Activated CD8-positive, alpha-beta T cell treated with anti-CD3 and anti-CD28 coated beads for 36 hours (primary cell): ENCODE measurements at regions of chr1 and their contacts with region 1.

Region 1: DNA sequence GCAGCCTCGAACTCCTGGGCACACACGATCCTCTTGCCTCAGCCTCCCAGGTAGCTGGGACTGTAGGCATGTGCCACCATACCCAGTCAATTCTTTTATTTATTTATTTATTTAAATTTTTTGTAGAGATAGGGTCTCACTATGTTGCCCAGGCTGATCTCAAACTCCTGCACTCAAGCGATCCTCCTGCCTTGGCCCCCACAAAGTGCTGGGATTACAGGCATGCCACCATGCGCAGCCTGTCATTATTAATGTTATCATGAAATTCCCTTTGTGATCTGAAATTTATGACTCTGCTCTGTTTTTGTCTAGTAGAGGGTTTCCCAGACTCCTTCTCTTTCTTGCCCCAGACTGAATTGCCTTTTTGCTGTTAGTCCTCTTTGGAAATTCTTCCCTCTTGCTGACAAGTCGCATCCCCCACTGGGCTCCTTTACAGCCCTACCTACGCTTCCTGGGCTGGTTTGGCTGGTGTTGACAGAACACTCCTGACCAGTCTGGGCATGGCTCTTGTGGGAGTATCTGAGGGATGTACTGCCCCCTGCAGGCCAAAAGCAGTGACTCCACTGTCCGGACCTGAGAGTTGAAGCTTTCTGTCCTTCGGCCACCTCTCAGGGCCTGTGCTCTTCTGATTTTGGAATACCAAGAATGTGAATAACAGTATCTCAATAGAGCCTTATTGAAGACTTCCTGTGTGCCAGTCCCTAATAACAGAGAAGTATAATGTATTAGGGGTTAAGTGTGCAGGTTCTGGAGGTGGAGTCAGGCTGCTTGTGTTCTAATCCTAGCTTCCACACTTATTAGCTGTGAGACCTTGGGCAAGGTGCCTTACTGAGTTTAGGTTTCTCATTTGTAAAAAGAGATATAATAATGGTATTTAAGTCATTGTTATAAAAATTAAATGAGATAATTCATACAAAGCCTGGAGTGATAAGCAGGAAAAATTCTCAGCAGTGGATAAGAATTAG is 28.2 kb downstream of the TCEANC2 start:
- DNase-seq: peak; percentile 82
- ATAC-seq: peak; percentile 94
- H3K4me3 Mint-ChIP-seq: no peak overlapping the region
- H3K27ac Mint-ChIP-seq: no peak overlapping the region
- H3K4me1 Mint-ChIP-seq: peaks cover 7% of the 10 kb centered on the region
- H3K27me3 Mint-ChIP-seq: no peaks in the 10 kb centered on the region
- CTCF ChIP-seq: peak; percentile 80

Region 2: DNA sequence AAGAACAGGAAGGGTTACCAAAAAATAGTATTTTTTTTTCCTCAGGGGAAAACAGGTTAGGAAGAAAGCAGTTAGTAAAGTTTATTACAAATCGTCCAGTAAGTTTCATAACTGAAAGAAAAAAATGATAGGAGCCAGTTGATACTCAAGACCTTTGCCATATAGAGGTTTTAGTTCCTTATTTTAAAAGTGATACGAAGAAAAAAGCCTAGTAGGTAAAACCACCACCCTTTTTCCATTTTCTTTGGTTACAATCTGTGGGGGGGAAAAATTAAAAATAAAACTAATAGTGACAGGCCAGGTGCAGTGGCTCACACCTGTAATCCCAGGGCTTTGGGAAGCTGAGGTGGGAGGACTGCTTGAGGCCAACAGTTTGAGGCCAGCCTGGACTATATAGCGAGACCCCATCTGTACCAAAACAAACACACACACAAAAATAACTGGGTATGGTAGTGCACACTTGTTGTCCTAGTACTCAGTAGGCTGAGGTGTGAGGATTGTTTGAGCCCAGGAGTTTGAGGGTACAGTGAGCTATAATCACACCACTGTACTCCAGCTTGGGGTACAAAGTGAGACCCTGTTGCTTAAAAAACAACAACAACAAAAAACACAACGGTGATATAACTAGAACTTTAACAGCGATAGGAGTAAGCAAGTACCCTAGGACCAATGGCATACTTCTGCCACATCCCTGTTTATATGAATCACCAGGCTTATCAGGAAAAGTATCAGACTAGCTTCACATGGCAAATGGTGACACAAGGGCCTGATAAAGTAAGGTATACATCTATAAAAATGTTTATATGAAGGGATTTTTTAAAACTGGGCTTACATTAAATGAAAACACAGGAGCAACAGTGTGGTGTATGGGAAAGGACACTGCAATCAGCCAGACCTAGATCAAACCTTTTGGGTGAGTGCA is 33.9 kb before region 1 on chr1:
- CTCF ChIA-PET with region 1: interaction called, 14 read pairs
- POLR2A ChIA-PET with region 1: no interaction called
- intact Hi-C with region 1: no loop called
- DNase-seq: no peak
- ATAC-seq: no peak
- H3K4me3 Mint-ChIP-seq: no peak overlapping the region
- H3K27ac Mint-ChIP-seq: peak overlapping the region; percentile 71
- H3K4me1 Mint-ChIP-seq: peaks cover 46% of the 10 kb centered on the region
- H3K27me3 Mint-ChIP-seq: no peaks in the 10 kb centered on the region
- CTCF ChIP-seq: no peak

Region 3: DNA sequence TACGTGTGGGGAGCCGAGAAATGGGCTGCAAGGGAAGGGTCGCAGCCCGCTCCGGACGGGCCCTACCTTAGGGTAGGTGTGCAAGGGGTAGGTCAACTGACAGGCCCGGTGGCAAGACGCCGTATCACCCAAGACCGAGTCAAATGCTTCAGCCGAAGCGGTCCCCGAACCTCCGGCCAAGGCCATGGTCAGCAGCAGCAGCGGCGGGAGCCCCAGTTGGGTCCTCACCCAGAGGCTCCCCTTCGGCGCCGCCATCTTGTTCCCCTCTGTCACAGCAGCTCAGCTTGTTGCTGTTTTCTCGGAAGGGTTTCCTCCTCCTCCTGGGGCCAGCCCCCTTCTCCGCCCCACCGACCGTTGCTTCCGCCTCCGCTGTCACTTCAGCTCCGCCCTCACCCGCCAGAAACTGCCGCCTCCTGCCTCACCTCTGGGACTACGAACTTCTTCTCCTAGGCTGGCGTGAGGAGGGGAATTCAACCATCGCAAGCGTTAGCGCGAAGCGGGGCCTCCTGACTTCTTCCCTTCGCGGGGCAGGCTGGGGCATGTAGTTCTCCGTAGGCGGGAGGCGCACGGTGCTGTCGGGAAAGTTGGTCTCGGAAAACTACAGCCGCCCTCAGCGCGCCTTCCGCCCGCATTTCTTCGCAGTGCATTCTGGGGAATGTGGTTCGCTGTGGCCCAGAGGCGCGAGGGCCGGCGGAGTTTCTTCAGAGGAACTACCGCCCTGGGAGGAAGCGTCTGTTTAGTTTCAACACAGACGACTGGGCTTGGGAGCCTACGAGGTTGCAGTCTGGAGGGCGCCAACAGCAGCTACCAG is 28.4 kb before region 1 on chr1 and contains the starts of genes TCEANC2 and TMEM59:
- CTCF ChIA-PET with region 1: interaction called, 14 read pairs
- POLR2A ChIA-PET with region 1: no interaction called
- intact Hi-C with region 1: no loop called
- DNase-seq: peak; percentile 99
- ATAC-seq: peak; percentile 95
- H3K4me3 Mint-ChIP-seq: no peak within 1 kb of the TSS
- H3K27ac Mint-ChIP-seq: no peak within 1 kb of the TSS
- H3K4me1 Mint-ChIP-seq: peaks cover 31% of the 10 kb centered on the region
- H3K27me3 Mint-ChIP-seq: no peaks in the 10 kb centered on the region
- CTCF ChIP-seq: no peak
- total RNA-seq, gene TCEANC2: 11.1 to 11.2 TPM
- total RNA-seq, gene TMEM59: 93.4 to 109 TPM

Region 4: DNA sequence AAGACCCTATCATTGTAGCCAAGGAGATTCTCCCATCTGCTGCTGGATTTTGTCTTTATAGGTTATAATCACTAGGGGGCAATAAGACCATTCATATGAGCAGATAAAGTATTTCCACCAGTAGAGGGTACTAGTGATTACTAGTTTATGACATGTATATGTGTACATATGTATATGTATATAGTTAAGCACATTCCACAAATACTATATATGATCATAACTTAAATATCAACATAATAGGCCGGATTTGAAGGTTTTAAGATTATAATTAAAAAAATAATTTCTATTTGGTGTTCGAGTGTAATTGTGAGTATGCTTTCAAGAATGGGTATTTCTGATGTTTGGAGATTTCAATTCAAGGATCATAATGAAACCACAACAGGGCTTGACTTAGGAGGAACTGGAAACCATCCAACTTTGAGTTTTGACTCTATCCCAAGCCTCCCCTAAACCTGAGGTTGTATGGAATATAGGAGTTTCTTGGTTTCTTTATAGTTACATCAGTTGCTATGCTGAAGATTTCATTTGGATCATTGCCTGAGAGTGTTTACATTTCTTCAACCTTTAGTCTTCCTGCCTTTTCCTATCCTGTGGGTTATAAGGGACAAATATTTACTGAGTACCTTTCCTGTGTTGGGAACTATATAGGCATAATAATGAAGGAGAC is 11.3 kb before region 1 on chr1:
- CTCF ChIA-PET with region 1: interaction called, 19 read pairs
- POLR2A ChIA-PET with region 1: interaction called, 3 read pairs
- intact Hi-C with region 1: no loop called
- DNase-seq: no peak
- ATAC-seq: peak; percentile 92
- H3K4me3 Mint-ChIP-seq: no peak overlapping the region
- H3K27ac Mint-ChIP-seq: no peak overlapping the region
- H3K4me1 Mint-ChIP-seq: no peaks in the 10 kb centered on the region
- H3K27me3 Mint-ChIP-seq: no peaks in the 10 kb centered on the region
- CTCF ChIP-seq: peak; percentile 78

Region 5: GRCh38 chr1:54091666-54092065 is 10.1 kb after region 1 on chr1:
- CTCF ChIA-PET with region 1: interaction called, 19 read pairs
- POLR2A ChIA-PET with region 1: interaction called, 3 read pairs
- intact Hi-C with region 1: no loop called
- DNase-seq: no peak
- ATAC-seq: no peak
- H3K4me3 Mint-ChIP-seq: no peak overlapping the region
- H3K27ac Mint-ChIP-seq: no peak overlapping the region
- H3K4me1 Mint-ChIP-seq: no peaks in the 10 kb centered on the region
- H3K27me3 Mint-ChIP-seq: no peaks in the 10 kb centered on the region
- CTCF ChIP-seq: no peak

Region 6: DNA sequence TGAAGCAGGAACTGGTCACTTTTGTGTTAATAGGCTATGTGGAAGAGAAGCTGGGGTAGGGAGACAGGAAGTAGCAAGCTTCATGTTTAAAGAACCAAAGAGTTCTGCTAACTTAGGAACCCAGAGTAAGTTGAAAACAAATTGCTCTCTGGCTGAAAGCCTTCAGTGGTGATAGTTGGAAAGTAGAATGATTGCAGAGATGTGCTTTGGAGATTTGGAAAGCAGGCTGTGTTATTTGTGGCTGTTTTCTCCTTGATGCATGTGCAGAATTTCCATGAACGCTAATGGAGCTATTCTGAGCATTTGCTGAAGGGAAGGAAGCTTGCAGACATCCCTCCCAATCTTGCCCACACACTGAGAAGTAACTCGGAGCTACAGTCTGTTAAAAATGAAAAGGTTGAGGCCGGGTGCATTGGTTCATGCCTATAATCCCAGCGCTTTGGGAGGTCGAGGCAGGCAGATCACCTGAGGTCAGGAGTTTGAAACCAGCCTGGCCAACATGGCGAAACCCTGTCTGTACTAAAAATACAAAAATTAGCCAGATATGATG is 17.5 kb after region 1 on chr1:
- CTCF ChIA-PET with region 1: interaction called, 11 read pairs
- POLR2A ChIA-PET with region 1: interaction called, 3 read pairs
- intact Hi-C with region 1: no loop called
- DNase-seq: no peak
- ATAC-seq: no peak
- H3K4me3 Mint-ChIP-seq: no peak overlapping the region
- H3K27ac Mint-ChIP-seq: no peak overlapping the region
- H3K4me1 Mint-ChIP-seq: no peaks in the 10 kb centered on the region
- H3K27me3 Mint-ChIP-seq: no peaks in the 10 kb centered on the region
- CTCF ChIP-seq: no peak